Pancreas (tissue), 10 donors: ENCODE measurements at regions of chr9 and their contacts with region 1.

Region 1: GRCh38 chr9:82526577-82526976 is 536.4 kb downstream of the RASEF start:
- DNase-seq: no peak
- ATAC-seq: no peak
- H3K4me3 ChIP-seq: no peak overlapping the region
- H3K27ac ChIP-seq: no peak overlapping the region
- H3K4me1 ChIP-seq: no peaks in the 10 kb centered on the region
- H3K27me3 ChIP-seq: no peaks in the 10 kb centered on the region
- CTCF ChIP-seq: no peak

Region 2: GRCh38 chr9:82553654-82554366 is 27.2 kb after region 1 on chr9:
- intact Hi-C with region 1: no loop called
- DNase-seq: no peak
- ATAC-seq: no peak
- H3K4me3 ChIP-seq: no peak overlapping the region
- H3K27ac ChIP-seq: no peak overlapping the region
- H3K4me1 ChIP-seq: peaks cover 0 to 46% (median 35%) of the 10 kb centered on the region in 3 donors
- H3K27me3 ChIP-seq: no peaks in the 10 kb centered on the region
- CTCF ChIP-seq: no peak

Region 3: GRCh38 chr9:82601293-82601771 is 74.8 kb after region 1 on chr9:
- intact Hi-C with region 1: no loop called
- DNase-seq: no peak
- ATAC-seq: no peak
- H3K4me3 ChIP-seq: no peak overlapping the region
- H3K27ac ChIP-seq: peak overlapping the region in 2 of 4 donors; percentile 34 to 83
- H3K4me1 ChIP-seq: peaks cover 30 to 56% (median 49%) of the 10 kb centered on the region in 3 donors
- H3K27me3 ChIP-seq: no peaks in the 10 kb centered on the region
- CTCF ChIP-seq: no peak

Region 4: GRCh38 chr9:82613498-82613897 is 86.9 kb after region 1 on chr9:
- intact Hi-C with region 1: loop called in 1 of 3 experiments (anchors 10 kb)
- DNase-seq: no peak
- ATAC-seq: no peak
- H3K4me3 ChIP-seq: no peak overlapping the region
- H3K27ac ChIP-seq: no peak overlapping the region
- H3K4me1 ChIP-seq: no peaks in the 10 kb centered on the region
- H3K27me3 ChIP-seq: no peaks in the 10 kb centered on the region
- CTCF ChIP-seq: no peak